ENCODE measurements at regions of chr13 and their contacts with region 1.

Region 1: DNA sequence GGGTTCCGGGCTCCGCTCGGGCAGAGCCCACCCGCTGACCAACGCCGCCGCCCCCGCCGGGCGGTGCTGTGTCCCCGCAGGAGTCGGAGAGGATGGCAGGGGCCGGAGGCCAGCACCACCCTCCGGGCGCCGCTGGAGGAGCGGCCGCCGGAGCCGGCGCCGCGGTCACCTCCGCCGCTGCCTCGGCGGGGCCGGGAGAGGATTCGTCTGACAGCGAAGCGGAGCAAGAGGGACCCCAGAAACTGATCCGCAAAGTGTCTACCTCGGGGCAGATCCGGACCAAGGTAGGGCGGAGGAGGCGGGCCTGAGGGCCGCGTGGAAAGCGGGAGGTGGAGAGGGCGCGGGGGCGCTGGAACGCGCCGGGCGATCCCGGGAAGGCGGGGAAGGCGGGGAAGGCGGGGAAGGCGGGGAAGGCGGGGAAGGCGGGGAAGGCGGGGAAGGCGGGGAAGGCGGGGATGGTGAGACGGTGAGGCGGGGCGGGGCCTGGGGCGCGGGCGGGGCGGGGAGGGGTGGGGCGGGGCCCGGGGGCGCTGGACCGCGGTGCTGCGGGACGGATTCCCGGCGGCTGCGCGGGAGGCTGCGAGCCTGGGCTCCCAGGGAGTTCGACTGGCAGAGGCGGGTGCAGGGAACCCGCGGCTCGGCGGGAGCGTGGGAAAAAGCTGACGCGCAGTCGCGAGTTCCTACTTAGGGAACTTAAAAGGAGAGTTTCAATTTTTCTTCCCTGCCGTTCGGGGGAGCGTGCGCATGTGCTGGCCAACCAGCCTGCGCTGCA is 420 bp downstream of the DGKH start:
- DNase-seq: peak; percentile 59 to 96 (median 74)

Region 2: DNA sequence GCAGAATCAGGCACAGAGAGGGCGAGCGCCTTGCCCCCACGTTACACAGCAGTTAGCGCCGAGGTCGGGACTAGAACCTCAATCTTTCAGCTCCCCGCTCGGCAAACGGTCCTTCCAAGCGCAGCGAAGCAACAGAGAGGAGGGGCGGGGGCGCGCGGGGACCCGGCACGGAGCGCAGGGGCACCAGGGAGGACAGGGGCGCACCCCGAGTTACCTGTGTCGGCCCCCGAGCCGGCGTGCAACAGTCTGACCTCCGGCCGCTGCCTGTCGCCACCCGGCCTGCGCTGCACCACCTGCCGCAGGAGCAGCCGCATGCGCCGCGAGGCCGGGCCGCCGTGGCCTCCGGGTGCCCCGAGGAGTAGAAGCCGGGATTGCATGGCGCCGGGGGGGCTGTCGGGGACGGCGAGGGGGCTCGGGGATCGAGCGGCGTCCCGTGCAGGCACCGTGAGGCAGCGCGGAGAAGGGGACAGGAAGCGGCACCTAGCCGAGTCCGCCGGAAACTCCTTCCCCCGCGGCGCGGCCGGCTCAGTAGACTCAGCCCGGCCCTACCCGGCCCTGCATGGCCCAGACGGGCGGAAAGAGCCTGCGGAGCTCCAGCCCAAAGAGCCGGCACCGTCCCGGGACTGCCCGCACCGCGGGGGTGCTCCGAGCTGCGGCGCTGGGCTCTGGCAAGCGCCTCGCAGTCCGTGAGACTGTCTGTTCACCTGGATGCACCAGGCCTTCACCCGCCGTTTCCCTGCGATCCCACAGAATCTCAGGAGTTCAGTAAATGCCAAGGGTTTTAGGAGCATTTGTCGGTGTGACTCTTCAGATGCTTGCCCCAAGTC is 88.0 kb before region 1 on chr13 and contains the start of gene VWA8:
- intact Hi-C with region 1: loop called (anchors 5 kb)
- DNase-seq: peak; percentile 67 to 96 (median 78)

Measured in posterior cingulate gyrus (tissue), 11 donors.